ENCODE measurements at regions of chr5 and their contacts with region 1.

Region 1: DNA sequence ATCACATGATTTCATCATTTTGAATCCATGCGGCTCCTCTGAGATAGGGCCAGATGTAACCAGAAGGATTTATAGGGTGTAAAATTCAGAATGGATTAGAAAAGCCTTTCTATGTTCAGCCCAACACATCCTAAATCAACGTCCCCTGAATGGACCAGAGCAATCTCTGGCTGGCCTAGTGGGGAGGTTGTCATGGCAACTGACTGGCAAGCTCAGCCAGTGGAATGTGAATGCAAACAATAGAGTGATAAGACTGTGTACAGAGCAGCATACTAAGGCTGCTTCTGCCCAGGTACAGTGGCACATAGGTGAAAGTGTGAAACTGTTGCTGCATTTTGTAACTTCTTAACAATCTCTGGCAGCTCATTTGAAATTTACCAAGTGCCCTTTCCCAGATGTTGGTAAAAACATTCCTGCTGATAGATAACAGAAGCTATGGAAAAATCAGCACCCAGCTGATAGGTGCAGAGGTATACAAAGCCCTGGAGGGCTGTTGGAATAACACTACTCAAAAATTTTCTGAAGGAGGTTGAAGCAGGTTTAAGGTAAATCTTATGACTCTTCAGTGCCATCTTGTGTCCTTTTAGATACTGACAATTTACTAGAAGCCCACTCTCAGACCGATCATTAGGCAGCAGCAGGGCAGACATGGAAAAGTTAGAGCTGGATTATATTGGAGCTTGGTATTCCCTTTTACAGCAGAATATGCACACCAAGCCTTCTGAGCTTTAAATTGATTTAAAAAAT is 267.2 kb downstream of the RAB3C start:
- H3K4me3 ChIP-seq: no peak overlapping the region
- H3K27ac ChIP-seq: no peak overlapping the region
- H3K4me1 ChIP-seq: peaks cover 2% of the 10 kb centered on the region; the same call in 1 of the 2 replicates
- CTCF ChIP-seq: peak; percentile 42

Region 2: GRCh38 chr5:58477760-58478376 is 372.2 kb before region 1 on chr5:
- CTCF ChIA-PET with region 1: interaction called, 17 read pairs
- POLR2A ChIA-PET with region 1: no interaction called
- H3K4me3 ChIP-seq: no peak overlapping the region
- H3K27ac ChIP-seq: no peak overlapping the region
- H3K4me1 ChIP-seq: no peaks in the 10 kb centered on the region
- CTCF ChIP-seq: no peak

Region 3: GRCh38 chr5:58498340-58498942 is 351.7 kb before region 1 on chr5:
- CTCF ChIA-PET with region 1: interaction called, 118 read pairs
- POLR2A ChIA-PET with region 1: no interaction called
- H3K4me3 ChIP-seq: no peak overlapping the region
- H3K27ac ChIP-seq: no peak overlapping the region
- H3K4me1 ChIP-seq: no peaks in the 10 kb centered on the region
- CTCF ChIP-seq: peak; percentile 63; the same call in 1 of the 2 replicates

Region 4: GRCh38 chr5:58505971-58506640 is 344.0 kb before region 1 on chr5:
- CTCF ChIA-PET with region 1: interaction called, 118 read pairs
- POLR2A ChIA-PET with region 1: no interaction called
- H3K4me3 ChIP-seq: no peak overlapping the region
- H3K27ac ChIP-seq: no peak overlapping the region
- H3K4me1 ChIP-seq: no peaks in the 10 kb centered on the region
- CTCF ChIP-seq: no peak

Region 5: GRCh38 chr5:58764199-58764598 is 85.9 kb before region 1 on chr5:
- CTCF ChIA-PET with region 1: no interaction called
- POLR2A ChIA-PET with region 1: no interaction called
- H3K4me3 ChIP-seq: no peak overlapping the region
- H3K27ac ChIP-seq: no peak overlapping the region
- H3K4me1 ChIP-seq: no peaks in the 10 kb centered on the region
- CTCF ChIP-seq: no peak

Region 6: GRCh38 chr5:58818462-58818861 is 31.6 kb before region 1 on chr5:
- CTCF ChIA-PET with region 1: interaction called, 14 read pairs
- POLR2A ChIA-PET with region 1: no interaction called
- H3K4me3 ChIP-seq: no peak overlapping the region
- H3K27ac ChIP-seq: no peak overlapping the region
- H3K4me1 ChIP-seq: no peaks in the 10 kb centered on the region
- CTCF ChIP-seq: no peak

Region 7: DNA sequence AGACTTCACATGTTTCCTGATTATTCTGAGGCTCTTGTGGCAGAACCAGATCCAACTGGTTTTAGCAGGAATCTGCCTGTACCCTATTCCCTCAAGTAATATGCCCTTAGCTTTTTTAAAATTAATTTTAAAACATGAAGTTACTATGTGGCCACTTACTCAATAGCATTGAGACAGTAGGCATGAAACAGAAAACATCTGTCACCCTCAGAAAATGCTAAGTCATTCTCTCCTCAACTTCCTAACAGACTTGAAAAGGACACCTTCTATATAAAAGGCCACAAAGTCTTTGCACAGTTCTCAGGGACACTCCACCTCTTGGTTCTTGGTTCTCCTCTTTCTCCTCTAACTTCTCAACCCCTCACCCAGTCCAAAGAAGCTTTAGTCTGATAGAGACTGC is 10.6 kb after region 1 on chr5:
- CTCF ChIA-PET with region 1: interaction called, 17 read pairs
- POLR2A ChIA-PET with region 1: no interaction called
- H3K4me3 ChIP-seq: no peak overlapping the region
- H3K27ac ChIP-seq: no peak overlapping the region
- H3K4me1 ChIP-seq: no peaks in the 10 kb centered on the region
- CTCF ChIP-seq: no peak

Measured in HEK293 (cell line).